ENCODE measurements at regions of chr9 and their contacts with region 1.

Region 1: GRCh38 chr9:126514047-126514821 is 99.5 kb upstream of the LMX1B start:
- DNase-seq: peak; percentile 67
- H3K4me3 Mint-ChIP-seq: no peak overlapping the region
- H3K27ac Mint-ChIP-seq: no peak overlapping the region
- H3K4me1 Mint-ChIP-seq: peaks cover 31% of the 10 kb centered on the region
- H3K27me3 Mint-ChIP-seq: peaks cover 59% of the 10 kb centered on the region

Region 2: DNA sequence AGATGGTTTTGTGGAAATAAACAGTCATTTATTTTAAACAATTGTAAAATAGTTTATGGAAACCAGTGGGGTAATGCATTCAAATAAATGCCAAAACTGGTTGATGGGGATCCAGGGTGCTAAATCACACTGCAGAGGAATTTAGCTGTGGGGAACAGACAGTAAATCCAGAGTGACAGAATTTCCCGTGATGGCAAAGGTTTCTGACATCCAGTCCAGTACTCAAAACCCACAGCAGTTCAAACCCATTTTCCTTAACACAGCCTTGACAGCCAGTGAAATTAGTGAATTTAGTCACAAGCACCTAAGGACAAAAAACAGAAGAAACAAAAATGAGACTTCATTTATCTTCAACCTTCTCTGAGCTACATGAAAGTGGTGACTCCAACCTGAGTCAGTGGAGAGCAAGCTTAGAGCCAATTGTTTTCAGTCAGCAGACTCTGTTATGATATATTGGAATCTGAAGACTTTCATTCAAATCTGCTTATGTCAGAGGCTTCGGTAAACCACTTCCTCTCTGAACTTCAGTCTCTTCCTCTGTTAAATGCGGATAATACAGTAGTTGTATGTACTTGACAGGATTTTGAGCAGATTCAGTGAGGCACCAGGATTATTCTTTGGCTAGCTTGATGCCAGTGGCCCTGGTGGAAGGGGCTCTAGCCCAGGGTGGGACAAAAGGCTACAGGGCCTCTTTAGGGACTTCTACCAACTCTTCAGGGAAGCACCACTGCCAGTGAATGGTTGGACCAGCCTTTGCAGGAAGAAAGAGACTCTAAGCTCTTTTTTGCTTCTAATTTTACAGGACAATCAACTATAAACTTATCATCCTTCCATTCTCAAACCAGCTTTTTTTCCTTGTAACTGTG is 992.5 kb before region 1 on chr9:
- CTCF ChIA-PET with region 1: no interaction called
- POLR2A ChIA-PET with region 1: no interaction called
- intact Hi-C with region 1: loop called (anchors 10 kb)
- DNase-seq: peak; percentile 56
- H3K4me3 Mint-ChIP-seq: peak overlapping the region; percentile 52
- H3K27ac Mint-ChIP-seq: peak overlapping the region; percentile 81
- H3K4me1 Mint-ChIP-seq: peaks cover 52% of the 10 kb centered on the region
- H3K27me3 Mint-ChIP-seq: no peaks in the 10 kb centered on the region

Region 3: GRCh38 chr9:126471084-126471624 is 43.1 kb before region 1 on chr9:
- CTCF ChIA-PET with region 1: interaction called, 3 read pairs
- POLR2A ChIA-PET with region 1: interaction called, 6 read pairs
- intact Hi-C with region 1: loop called (anchors 1 kb)
- DNase-seq: peak; percentile 92
- H3K4me3 Mint-ChIP-seq: peak overlapping the region; percentile 51
- H3K27ac Mint-ChIP-seq: peak overlapping the region; percentile 49
- H3K4me1 Mint-ChIP-seq: peaks cover 48% of the 10 kb centered on the region
- H3K27me3 Mint-ChIP-seq: peaks cover 7% of the 10 kb centered on the region

Region 4: DNA sequence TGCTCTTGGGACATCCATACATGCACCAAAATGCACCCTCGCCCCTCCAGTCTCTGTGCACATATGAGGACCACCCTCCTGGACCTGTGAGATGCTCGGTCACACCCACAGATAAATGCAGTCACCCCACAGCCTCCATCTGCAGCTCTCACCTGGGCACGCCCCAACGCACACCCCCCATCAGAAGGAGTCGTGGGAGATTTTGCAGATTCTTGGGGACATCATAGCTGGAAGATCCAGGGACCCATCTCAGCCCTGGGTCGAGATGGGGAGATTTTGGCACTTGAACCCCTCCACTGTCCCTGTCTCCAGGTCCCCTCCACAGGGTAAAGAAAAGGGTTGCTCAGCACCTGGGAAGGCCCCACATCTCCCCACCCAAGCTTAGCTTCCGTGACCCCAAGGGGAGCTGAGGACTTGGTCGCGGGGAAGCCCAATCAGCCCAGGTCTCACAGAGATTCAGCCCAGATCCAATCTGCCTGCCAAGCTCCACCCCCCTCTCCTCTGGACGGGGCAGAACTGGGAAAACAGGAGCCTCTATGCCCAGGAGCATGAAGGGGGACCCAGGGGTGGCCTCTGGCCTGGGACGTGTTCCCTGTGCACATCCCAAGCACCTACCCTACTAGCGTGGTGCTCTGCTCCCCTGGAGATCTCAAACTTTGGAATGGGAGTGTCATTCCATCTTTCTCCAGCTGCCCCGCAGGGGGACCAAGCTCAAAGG is 10.3 kb after region 1 on chr9:
- CTCF ChIA-PET with region 1: interaction called, 7 read pairs
- POLR2A ChIA-PET with region 1: no interaction called
- intact Hi-C with region 1: loop called (anchors 1 kb)
- DNase-seq: no peak
- H3K4me3 Mint-ChIP-seq: no peak overlapping the region
- H3K27ac Mint-ChIP-seq: peak overlapping the region; percentile 19
- H3K4me1 Mint-ChIP-seq: peaks cover 31% of the 10 kb centered on the region
- H3K27me3 Mint-ChIP-seq: peaks cover 13% of the 10 kb centered on the region

Region 5: DNA sequence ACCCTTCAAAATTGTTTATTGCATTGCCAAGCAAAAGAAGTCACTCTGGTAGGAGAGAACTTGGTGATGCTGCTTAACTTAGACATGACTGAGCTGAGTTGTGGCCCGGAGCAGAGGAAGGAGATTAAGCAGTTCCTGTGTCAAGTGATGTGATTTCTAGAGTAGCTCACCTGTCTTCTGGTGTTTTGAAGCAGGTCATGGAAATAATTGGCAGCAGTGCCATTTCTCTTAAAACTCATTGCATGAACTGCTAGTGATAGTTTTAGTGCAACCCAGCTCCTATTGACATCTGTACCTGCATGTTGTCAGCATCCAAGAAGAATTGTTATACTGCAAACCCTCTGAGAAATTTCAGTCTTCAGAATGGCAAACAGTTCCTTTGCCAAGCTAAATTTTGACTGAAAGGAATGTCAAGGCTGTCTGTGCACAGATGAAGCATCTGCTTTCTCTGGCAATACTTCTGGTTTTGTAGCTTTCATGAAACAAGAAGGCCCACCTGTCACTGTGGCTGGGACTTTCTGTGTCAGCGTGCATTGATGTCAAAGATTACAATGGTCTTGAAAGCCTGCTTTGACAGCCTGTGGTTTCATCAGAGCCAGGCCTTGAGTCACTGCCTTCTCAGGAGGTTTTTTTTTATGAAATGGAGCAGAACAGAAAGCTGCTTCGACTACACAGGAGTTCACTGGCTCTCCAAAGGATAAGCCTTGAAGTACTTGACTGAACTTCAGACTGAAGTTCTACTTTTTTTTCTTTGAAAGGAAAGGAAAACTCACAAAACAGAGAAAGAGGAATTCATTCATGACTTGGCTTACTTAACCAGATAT is 490.9 kb after region 1 on chr9:
- CTCF ChIA-PET with region 1: no interaction called
- POLR2A ChIA-PET with region 1: no interaction called
- intact Hi-C with region 1: loop called (anchors 10 kb)
- DNase-seq: peak; percentile 88
- H3K4me3 Mint-ChIP-seq: no peak overlapping the region
- H3K27ac Mint-ChIP-seq: peak overlapping the region; percentile 57
- H3K4me1 Mint-ChIP-seq: peaks cover 23% of the 10 kb centered on the region
- H3K27me3 Mint-ChIP-seq: peaks cover 25% of the 10 kb centered on the region